Heart right ventricle (tissue), 16 donors: ENCODE measurements at regions of chr14 and their contacts with region 1.

Region 1: GRCh38 chr14:101964297-101965144 is at the start of gene DYNC1H1:
- DNase-seq: peak; percentile 93 to 97
- ATAC-seq: peak; percentile 90 to 96 (median 92)
- H3K4me3 ChIP-seq: peak within 1 kb of the TSS; percentile 83 to 100 (median 99)
- H3K27ac ChIP-seq: peak within 1 kb of the TSS; percentile 91 to 98 (median 97)
- H3K4me1 ChIP-seq: peaks cover 6 to 71% (median 54%) of the 10 kb centered on the region in 9 donors
- H3K27me3 ChIP-seq: no peaks in the 10 kb centered on the region
- CTCF ChIP-seq: no peak
- total RNA-seq, gene DYNC1H1: 413 to 777 (median 634) TPM

Region 2: GRCh38 chr14:101707068-101707842 is 257.3 kb before region 1 on chr14:
- intact Hi-C with region 1: loop called in 5 of 10 experiments (anchors 5 to 10 kb)
- DNase-seq: peak in 1 of 2 donors; percentile 79
- ATAC-seq: peak; percentile 38 to 83 (median 64)
- H3K4me3 ChIP-seq: peak overlapping the region in 2 of 10 donors; percentile 1 to 25
- H3K27ac ChIP-seq: peak overlapping the region in 9 of 10 donors; percentile 71 to 90 (median 84)
- H3K4me1 ChIP-seq: peaks cover 10 to 33% (median 25%) of the 10 kb centered on the region in 9 donors
- H3K27me3 ChIP-seq: peaks cover 0 to 29% (median 5%) of the 10 kb centered on the region in 7 donors
- CTCF ChIP-seq: peak; percentile 72 to 90 (median 84)

Region 3: DNA sequence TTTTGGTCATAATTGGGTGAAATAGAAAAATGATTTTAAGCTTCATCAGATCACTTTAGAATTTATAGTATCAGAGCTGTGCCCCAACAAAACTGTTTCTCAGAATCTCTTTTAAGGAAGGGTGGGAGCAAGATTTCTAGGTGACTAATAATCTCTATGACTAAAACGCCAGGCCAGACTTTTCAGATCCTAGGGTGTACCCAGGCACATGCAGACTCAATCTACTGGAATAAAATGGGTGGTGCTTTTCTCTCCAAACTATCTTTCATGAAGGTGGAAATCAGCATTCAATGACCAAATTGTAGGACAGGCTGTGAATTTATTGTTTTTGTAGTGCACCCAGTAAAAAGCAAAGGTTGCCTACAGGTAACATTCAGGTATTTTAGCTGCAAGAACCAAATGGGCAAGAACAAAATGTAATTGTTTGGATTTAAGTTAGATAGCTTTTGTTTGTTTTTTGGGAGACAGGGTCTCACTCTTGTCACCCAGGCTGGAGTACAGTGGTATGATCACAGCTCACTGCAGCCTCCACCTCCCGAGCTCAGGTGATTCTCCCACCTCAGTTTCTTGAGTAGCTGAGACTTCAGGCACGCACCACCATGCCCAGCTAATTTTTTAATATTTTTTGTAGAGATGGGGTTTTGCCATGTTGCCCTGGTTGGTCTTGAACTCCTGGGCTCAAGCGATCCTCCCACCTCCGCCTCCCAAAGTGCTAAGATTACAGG is 153.5 kb before region 1 on chr14:
- intact Hi-C with region 1: no loop called
- DNase-seq: no peak
- ATAC-seq: no peak
- H3K4me3 ChIP-seq: peak overlapping the region in 9 of 10 donors; percentile 46 to 81 (median 60)
- H3K27ac ChIP-seq: peak overlapping the region; percentile 88 to 100 (median 95)
- H3K4me1 ChIP-seq: peaks cover 15 to 73% (median 61%) of the 10 kb centered on the region in 9 donors
- H3K27me3 ChIP-seq: no peaks in the 10 kb centered on the region
- CTCF ChIP-seq: no peak

Region 4: GRCh38 chr14:101947906-101948665 is 16.4 kb before region 1 on chr14:
- intact Hi-C with region 1: loop called in 1 of 10 experiments (anchors 2 kb)
- DNase-seq: peak; percentile 100
- ATAC-seq: peak; percentile 98 to 99 (median 99)
- H3K4me3 ChIP-seq: peak overlapping the region; percentile 57 to 98 (median 78)
- H3K27ac ChIP-seq: peak overlapping the region; percentile 84 to 100 (median 96)
- H3K4me1 ChIP-seq: peaks cover 3 to 29% (median 20%) of the 10 kb centered on the region in 9 donors
- H3K27me3 ChIP-seq: peaks cover 0 to 25% (median 0%) of the 10 kb centered on the region in 7 donors
- CTCF ChIP-seq: no peak

Region 5: DNA sequence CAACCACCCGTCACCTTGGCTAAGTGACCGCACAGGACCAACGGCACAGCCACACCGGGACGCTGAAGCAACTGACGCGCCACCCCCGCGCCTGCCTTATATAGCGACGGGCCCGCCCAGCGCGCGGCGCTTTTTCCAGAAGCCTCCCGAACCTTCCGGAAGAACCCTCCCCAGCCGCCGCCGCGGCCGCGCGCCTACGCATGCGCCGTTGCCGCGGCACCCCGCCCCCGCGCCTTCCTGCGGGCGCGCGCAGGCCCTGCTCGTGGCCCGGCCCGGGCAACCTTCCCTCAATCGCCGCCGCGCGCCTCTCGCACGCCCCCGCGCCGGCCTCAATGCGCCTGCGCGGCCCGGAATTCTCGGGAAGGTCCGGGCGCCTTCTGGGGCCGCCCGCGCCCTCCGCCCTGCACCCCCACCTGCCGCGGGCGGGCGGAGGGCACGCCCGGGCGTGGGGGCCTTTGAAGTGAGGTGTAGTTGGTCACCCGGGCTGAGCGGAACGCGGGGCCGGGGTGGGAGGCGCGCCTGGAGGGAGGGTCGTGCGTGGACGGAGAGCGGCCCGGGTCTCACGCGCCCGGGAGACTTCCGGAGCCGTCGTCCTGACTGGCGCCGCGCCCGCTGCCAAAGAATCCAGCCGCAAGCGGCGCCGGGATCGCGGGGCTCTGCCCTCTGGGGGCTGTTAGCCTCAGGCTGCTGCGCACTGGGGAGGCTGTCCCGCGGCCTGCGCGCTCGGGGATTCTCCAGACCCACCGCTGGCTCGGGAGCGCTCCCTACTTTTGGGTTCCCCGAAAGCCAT is 122.6 kb after region 1 on chr14 and contains the start of gene HSP90AA1:
- intact Hi-C with region 1: loop called in 2 of 10 experiments (anchors 2 to 5 kb)
- DNase-seq: peak; percentile 95
- ATAC-seq: peak; percentile 83 to 95 (median 91)
- H3K4me3 ChIP-seq: peak within 1 kb of the TSS; percentile 72 to 99 (median 86)
- H3K27ac ChIP-seq: peak within 1 kb of the TSS; percentile 99 to 100 (median 100)
- H3K4me1 ChIP-seq: peaks cover 5 to 55% (median 50%) of the 10 kb centered on the region in 9 donors
- H3K27me3 ChIP-seq: no peaks in the 10 kb centered on the region
- CTCF ChIP-seq: peak in 6 of 9 donors; percentile 12 to 49 (median 34)
- total RNA-seq, gene HSP90AA1: 315 to 501 (median 402) TPM

Region 6: GRCh38 chr14:102096214-102097114 is 131.9 kb after region 1 on chr14:
- intact Hi-C with region 1: loop called in 6 of 10 experiments (anchors 2 to 5 kb)
- DNase-seq: peak; percentile 83 to 87
- ATAC-seq: peak; percentile 68 to 95 (median 90)
- H3K4me3 ChIP-seq: no peak overlapping the region
- H3K27ac ChIP-seq: no peak overlapping the region
- H3K4me1 ChIP-seq: peaks cover 0 to 10% (median 4%) of the 10 kb centered on the region in 9 donors
- H3K27me3 ChIP-seq: no peaks in the 10 kb centered on the region
- CTCF ChIP-seq: peak; percentile 75 to 90 (median 88)